Lower leg skin (tissue), 4 donors: ENCODE measurements at regions of chr17 and their contacts with region 1.

Region 1: DNA sequence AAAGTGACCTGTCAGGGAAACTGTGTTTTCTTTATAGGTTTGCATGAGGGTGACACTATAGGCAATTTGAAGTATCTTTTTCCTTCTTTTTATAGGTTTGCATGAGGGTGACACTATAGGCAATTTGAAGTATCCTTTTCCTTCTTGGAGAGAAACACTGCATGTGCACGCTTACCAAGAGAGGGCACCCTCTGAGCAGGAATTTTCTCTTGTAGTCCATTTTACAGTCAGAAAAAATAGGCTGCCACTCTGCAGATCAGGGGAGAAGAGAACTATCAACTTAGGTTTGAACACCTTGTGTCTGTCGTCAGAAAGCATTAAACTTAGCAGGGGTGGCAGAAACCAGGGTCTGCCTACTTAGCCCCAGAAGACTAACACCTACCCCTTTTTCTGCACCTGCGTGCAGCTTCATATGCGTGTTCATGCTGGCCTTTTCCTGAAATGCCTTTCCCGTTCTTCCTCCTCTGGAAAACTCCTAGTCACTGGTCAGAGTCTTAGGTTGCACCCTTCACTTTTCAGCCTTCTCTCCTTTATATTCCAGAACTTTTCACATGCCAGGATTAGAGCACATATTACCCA is 16.4 kb upstream of the SMIM36 start:
- DNase-seq: peak in 1 of 2 donors; percentile 20
- H3K4me3 ChIP-seq: no peak overlapping the region
- CTCF ChIP-seq: no peak
- POLR2A ChIP-seq: no peak

Region 2: DNA sequence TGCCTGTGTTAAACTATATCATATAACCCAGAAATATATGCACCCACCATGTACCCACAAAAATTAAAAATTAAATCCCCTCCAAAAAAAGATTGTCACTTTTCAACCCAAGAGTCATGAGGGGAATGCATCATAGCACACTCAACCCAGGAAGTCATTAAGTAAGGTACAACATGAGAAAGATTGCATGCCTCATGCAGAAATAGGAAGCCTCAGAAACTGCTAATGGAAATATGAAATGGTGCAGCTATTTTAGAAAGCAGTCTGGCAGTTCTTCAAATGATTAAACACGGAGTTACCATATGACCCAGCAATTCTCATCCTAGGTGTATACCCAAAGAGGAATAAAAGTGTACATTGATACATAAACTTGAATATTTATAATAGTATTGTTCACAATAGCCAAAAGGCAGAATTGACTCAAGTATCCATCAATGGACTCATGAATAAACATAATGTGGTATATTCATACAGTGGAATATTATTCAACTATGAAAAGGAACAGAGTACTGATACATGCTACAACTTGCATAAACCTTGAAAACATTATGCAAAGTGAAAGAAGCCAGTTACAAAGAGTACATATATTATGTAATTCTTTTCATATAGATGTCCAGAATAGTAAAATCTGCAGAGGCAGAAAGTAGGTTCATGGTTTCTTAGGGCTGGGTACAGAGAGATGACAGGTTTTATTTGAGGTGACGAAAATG is 124.6 kb after region 1 on chr17:
- intact Hi-C with region 1: no loop called
- DNase-seq: no peak
- H3K4me3 ChIP-seq: no peak overlapping the region
- CTCF ChIP-seq: no peak
- POLR2A ChIP-seq: no peak

Region 3: GRCh38 chr17:55770148-55770870 is 242.7 kb after region 1 on chr17:
- intact Hi-C with region 1: loop called (anchors 2 kb)
- DNase-seq: no peak
- H3K4me3 ChIP-seq: no peak overlapping the region
- CTCF ChIP-seq: peak in 1 of 3 donors; percentile 16
- POLR2A ChIP-seq: no peak

Region 4: DNA sequence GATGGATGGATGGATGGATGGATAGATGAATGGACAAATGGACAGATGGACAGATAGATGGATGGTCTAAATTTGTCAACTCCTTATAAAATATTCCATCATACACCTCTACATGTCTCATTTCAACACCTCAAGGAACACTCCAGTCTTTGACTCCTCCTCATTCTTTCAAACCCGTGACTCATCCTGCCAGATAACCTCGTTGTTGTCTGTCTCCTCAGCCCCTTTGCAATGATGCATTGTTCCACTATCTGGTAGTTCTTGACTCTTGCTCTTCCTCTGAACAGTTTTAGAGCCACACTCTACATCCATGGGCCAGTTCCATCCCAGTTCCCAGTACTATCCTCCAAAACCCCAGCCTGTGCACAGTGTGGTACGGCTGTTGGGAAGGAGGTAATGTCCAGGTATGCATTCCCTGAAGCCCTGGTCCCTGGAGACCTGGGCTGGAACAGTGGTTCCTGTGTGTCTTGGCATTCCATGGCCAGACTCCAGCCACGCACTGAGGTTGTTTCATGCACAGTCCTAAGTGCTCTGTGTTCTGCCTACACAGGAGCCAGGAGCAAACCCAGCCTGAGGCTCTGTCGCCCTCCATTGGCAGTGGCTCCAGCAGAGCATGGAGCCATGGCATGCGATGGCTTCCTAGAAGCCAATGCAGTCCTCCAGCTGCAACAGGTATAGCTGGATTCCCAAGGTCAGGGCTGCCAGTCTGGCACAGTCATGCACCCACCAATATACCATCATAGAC is 1200.4 kb after region 1 on chr17:
- intact Hi-C with region 1: loop called (anchors 10 kb)
- DNase-seq: no peak
- H3K4me3 ChIP-seq: no peak overlapping the region
- CTCF ChIP-seq: no peak
- POLR2A ChIP-seq: no peak